Posterior cingulate gyrus (tissue), 11 donors: ENCODE measurements at regions of chr6 and their contacts with region 1.

Region 1: DNA sequence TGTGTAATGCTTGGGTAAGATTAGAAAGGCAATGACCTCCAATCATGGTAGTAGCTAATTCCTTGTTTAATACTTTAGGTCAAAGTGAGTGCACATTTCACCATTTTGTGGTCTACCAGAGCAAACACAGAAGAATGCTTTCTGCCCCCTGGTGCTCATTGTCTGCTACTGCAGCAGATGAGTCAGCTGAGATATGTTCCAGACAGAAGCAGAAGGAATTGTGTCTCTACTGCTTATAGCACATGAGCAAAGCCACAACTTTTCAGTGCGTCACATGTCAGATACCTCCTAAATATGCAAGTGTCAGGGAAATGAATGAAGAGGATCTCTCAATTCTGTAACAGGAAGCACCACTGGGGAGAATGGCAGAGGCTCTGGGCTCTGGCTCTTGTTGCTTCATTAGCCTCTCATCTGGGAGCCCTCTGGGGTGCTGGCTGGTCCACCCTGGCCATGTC is 308.9 kb downstream of the ALDH8A1 start:
- DNase-seq: peak; percentile 51 to 95 (median 76)

Region 2: GRCh38 chr6:134317471-134318131 is 323.4 kb before region 1 on chr6 and contains the start of gene SGK1:
- intact Hi-C with region 1: loop called (anchors 10 kb)
- DNase-seq: peak; percentile 38 to 91 (median 54)

Region 3: GRCh38 chr6:134436281-134436815 is 204.7 kb before region 1 on chr6:
- intact Hi-C with region 1: loop called (anchors 10 kb)
- DNase-seq: peak in 9 of 10 donors; percentile 28 to 93 (median 65)

Region 4: DNA sequence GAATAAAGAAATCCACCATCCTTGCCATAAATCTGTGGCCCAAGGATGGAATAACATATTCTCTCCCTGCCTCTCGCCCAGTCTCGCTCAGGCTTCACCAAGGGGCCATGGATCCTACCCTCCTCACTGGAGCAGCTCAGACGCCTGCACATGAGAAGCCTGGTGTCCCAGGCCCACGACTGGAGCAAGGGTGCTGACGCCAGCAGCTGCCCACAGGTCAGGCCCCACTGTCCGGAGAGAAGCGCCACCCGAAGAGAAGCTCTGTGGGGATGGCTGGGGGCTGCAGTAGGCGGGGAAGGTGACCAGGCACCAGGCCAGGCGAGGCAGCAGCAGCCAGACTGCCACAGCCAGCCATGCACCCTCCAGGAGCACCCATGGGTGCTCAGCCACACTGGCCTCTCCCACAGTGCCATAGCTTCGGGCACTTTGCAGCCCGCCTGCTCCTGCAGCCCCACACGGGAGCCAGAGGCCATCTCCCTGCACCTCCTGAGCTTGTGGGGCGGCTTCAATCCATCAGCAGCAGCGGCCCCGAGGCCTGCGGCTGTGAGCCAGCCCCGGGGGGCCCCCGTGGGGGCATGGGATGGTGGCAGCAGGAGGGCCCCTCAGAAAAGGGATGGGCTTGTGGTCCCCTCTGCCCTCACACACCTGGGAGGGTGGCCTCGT is 36.9 kb before region 1 on chr6:
- intact Hi-C with region 1: no loop called
- DNase-seq: peak in 3 of 10 donors; percentile 54 to 78 (median 72)

Region 5: GRCh38 chr6:134619789-134620188 is 21.2 kb before region 1 on chr6:
- intact Hi-C with region 1: no loop called
- DNase-seq: no peak

Region 6: GRCh38 chr6:134772671-134773368 is 131.8 kb after region 1 on chr6:
- intact Hi-C with region 1: no loop called
- DNase-seq: no peak

Region 7: DNA sequence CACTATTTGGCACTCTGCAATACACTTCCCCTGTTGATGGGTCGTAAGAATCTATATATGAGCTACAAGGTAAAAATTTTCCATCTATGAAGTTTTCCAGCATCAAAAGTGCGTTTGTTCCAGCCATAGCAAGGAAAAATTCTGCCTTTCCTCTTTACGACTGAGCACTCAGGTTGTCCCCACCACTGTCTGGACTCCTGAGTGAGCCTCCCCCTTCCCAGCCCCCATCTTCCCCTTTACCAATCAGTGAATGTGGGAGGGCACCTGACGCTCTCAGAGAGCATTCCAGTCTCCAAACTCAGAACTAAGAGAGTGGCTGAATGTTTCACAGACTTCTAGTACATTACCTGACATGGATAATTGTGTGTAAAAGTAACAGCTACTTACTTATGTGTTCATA is 308.9 kb after region 1 on chr6 and contains the start of gene ALDH8A1:
- intact Hi-C with region 1: loop called (anchors 10 kb)
- DNase-seq: no peak